A673 (cell line): ENCODE measurements at regions of chr2 and their contacts with region 1.

Region 1: GRCh38 chr2:38978296-38978903 is 88.7 kb downstream of the ARHGEF33 start:
- DNase-seq: no peak
- H3K4me3 ChIP-seq: no peak overlapping the region
- H3K27ac ChIP-seq: no peak overlapping the region
- H3K4me1 ChIP-seq: no peaks in the 10 kb centered on the region
- H3K27me3 ChIP-seq: no peaks in the 10 kb centered on the region
- CTCF ChIP-seq: no peak

Region 2: GRCh38 chr2:38988716-38989115 is 10.3 kb after region 1 on chr2:
- CTCF ChIA-PET with region 1: no interaction called
- POLR2A ChIA-PET with region 1: interaction called, 10 read pairs
- intact Hi-C with region 1: no loop called
- DNase-seq: no peak
- H3K4me3 ChIP-seq: no peak overlapping the region
- H3K27ac ChIP-seq: no peak overlapping the region
- H3K4me1 ChIP-seq: no peaks in the 10 kb centered on the region
- H3K27me3 ChIP-seq: no peaks in the 10 kb centered on the region
- CTCF ChIP-seq: no peak